Heart left ventricle (tissue), 16 donors: ENCODE measurements at regions of chr5 and their contacts with region 1.

Region 1: DNA sequence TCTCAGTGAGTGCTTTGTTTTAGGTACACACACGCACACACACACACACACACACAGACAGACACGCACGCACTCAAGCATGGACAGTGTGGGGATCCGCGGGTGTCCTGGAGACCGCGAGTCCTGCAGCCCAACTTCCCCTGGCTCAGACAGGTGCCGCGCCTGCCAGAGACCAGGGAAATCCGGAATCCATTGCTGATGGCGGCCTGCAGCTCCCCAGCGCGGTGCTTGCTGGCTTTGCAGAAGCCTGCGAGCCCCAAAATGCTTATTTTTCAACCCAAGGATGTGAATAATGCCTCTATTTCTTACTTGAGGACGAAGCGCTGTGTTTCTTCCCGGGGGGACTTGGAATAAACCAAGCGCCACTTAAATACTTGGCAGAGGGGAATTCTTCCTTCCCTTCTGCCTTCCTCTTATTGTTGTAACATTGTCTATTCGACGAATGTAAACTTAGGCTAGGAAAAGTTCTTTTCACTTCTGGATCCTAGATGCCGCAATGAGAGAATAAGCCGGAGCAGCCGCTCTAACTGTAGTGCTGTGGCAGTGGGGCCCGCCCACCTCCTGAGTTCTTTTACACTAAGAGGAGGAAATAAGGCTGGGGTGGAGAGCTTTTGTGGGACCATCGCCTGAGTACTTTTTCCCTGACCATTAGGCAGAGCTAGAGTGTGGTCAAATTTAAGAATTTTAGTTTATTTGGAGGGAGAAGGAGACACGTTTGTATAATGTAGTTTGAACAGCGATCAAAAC is 802 bp downstream of the ITGA2 start:
- DNase-seq: peak; percentile 26 to 58 (median 36)
- ATAC-seq: peak; percentile 41 to 83 (median 70)
- H3K4me3 ChIP-seq: peak overlapping the region; percentile 27 to 74 (median 62)
- H3K27ac ChIP-seq: peak overlapping the region in 3 of 12 donors; percentile 33 to 46 (median 45)
- H3K4me1 ChIP-seq: peaks cover 0 to 22% (median 10%) of the 10 kb centered on the region in 12 donors
- H3K27me3 ChIP-seq: peaks cover 0 to 9% (median 0%) of the 10 kb centered on the region in 9 donors
- CTCF ChIP-seq: peak in 7 of 12 donors; percentile 25 to 43 (median 38)
- POLR2A ChIP-seq: no peak

Region 2: DNA sequence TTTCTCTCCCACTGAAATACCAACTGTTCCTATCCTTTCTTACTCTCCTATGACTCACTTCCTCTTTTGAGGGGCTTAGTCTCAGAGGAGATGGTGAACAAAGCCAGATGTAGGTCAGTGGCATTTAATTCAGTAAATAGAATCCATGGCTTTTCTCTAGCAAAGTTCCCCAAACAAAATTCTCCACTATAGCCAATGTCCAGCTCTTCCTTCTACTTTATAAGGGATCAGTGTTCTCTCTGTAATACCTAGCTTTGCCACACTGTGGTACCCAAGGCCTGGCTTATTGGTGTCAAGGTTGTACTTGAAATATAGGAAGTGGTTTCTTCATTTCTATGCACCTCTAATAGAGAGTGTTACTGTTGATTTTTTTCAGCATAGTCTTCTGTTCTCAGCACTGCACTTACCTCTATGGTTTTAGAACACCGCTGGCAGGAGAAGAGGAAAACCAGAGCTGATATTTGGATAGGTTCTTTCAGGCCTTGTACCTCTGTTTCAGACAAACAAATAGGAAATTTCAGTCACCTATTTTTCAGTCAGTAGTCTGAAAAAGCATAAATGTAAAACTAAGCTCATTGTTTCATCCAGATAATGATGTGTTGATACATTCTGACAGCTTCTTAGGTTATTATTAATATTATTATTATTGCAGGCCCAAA is 41.4 kb before region 1 on chr5:
- intact Hi-C with region 1: loop called in 1 of 10 experiments (anchors 5 kb)
- DNase-seq: peak in 4 of 5 donors; percentile 27 to 47 (median 36)
- ATAC-seq: peak; percentile 67 to 96 (median 90)
- H3K4me3 ChIP-seq: no peak overlapping the region
- H3K27ac ChIP-seq: peak overlapping the region in 3 of 12 donors; percentile 19 to 60 (median 38)
- H3K4me1 ChIP-seq: peaks cover 0 to 29% (median 6%) of the 10 kb centered on the region in 12 donors
- H3K27me3 ChIP-seq: no peaks in the 10 kb centered on the region
- CTCF ChIP-seq: peak; percentile 59 to 79 (median 76)
- POLR2A ChIP-seq: no peak

Region 3: DNA sequence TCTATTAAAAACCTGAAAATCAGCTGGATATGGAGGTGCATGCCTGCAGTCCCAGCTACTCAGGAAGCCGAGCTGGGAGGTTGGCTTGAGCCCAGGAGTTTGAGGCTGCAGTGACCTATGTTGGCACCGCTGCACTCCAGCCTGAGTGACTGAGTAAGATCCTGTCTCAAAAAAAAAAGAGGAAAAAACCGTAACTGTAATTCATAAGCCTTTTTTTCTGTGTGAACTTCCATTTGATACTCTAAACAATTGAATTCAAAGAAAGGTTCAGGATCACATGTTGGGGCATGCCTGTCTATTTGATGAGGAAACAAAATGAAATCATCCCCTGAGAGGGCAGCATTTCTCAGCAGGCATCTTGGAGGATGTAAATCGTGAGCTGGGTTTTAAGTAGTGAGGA is 38.0 kb after region 1 on chr5:
- intact Hi-C with region 1: loop called in 2 of 10 experiments (anchors 5 to 10 kb)
- DNase-seq: peak in 4 of 5 donors; percentile 28 to 59 (median 44)
- ATAC-seq: peak in 3 of 4 donors; percentile 55 to 70 (median 66)
- H3K4me3 ChIP-seq: no peak overlapping the region
- H3K27ac ChIP-seq: peak overlapping the region in 1 of 12 donors; percentile 25
- H3K4me1 ChIP-seq: peaks cover 0 to 57% (median 5%) of the 10 kb centered on the region in 12 donors
- H3K27me3 ChIP-seq: no peaks in the 10 kb centered on the region
- CTCF ChIP-seq: no peak
- POLR2A ChIP-seq: no peak

Region 4: DNA sequence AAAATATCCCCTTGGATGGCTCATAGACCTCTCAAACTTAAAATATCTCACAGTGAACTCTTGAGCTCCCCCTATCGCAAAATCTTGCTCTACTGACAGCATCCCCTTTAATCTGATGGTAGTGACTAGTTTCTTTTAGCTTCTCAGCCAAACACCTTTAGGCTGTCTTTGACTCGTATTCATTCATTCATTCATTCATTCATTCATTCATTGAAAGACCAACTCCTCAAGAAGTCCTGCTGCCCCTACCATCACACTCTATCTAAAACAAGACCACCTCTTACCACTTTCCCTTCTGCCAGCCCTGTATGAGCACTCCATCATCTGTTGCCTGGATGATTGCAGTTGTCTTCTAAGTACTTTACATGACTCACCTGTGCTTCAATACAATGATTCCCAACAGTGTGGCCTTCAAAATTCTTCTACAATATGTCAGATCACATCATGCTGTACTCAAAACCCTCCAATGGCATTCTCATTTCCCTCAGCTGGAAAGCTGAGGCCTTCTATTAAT is 46.0 kb after region 1 on chr5:
- intact Hi-C with region 1: loop called in 1 of 10 experiments (anchors 10 kb)
- DNase-seq: no peak
- ATAC-seq: no peak
- H3K4me3 ChIP-seq: no peak overlapping the region
- H3K27ac ChIP-seq: no peak overlapping the region
- H3K4me1 ChIP-seq: peaks cover 0 to 44% (median 20%) of the 10 kb centered on the region in 12 donors
- H3K27me3 ChIP-seq: no peaks in the 10 kb centered on the region
- CTCF ChIP-seq: peak in 4 of 12 donors; percentile 9 to 23 (median 15)
- POLR2A ChIP-seq: no peak